Calu3 (cell line): ENCODE measurements at regions of chr4 and their contacts with region 1.

Region 1: DNA sequence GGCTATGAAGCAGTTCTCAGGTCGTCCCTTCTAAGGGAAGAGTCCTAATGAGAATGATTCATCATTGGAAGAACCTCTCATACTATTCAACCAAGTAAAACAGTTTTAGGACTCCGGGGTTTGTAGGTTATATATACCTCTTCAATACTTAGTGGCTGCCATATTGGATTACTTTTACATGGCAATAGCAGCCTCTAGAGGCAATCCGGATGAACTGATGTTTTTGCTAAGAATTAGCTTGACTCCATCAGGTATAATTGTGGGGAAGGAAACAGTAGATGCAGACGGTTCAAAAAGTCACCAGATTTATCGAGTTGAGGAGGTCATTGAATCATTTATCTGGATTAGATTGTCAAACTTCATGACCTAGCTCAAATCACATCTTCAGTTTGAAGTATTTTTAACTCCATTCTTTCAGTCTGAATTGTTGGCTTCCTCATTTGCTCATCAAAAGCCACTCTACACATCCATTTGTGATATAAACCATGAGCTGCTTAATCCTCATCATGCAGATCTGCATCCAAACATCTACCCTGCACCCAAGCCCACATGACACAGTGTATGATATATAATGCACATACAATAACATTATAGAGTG is 28.4 kb downstream of the GUCY1B1 start:
- DNase-seq: peak; percentile 28
- H3K4me3 Mint-ChIP-seq: no peak overlapping the region
- H3K27ac Mint-ChIP-seq: no peak overlapping the region
- H3K4me1 Mint-ChIP-seq: no peaks in the 10 kb centered on the region
- H3K27me3 Mint-ChIP-seq: no peaks in the 10 kb centered on the region
- CTCF ChIP-seq: no peak

Region 2: GRCh38 chr4:155140889-155141288 is 646.3 kb before region 1 on chr4:
- CTCF ChIA-PET with region 1: no interaction called
- intact Hi-C with region 1: no loop called
- DNase-seq: no peak
- H3K4me3 Mint-ChIP-seq: no peak overlapping the region
- H3K27ac Mint-ChIP-seq: no peak overlapping the region
- H3K4me1 Mint-ChIP-seq: no peaks in the 10 kb centered on the region
- H3K27me3 Mint-ChIP-seq: no peaks in the 10 kb centered on the region
- CTCF ChIP-seq: no peak

Region 3: DNA sequence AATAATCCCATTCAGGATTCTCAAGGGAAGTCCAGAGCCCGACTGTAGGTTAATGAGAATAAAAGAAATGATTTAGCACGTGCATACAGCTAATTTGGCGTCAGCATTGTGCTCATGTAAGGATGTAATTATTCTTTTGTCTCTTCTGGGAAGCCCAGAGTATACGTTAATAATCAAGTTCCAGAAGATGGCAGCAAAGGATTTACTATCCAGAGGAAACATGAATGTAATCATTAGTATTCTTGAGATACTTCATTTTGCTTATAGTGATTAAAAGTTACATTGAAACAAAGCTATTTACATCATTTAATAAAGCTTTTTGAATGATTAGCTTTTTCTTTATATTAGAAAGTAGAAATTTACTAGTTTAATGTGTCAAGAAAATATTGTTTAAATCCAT is 383.3 kb before region 1 on chr4:
- CTCF ChIA-PET with region 1: interaction called, 3 read pairs
- intact Hi-C with region 1: loop called (anchors 1 kb)
- DNase-seq: no peak
- H3K4me3 Mint-ChIP-seq: no peak overlapping the region
- H3K27ac Mint-ChIP-seq: no peak overlapping the region
- H3K4me1 Mint-ChIP-seq: peaks cover 19% of the 10 kb centered on the region
- H3K27me3 Mint-ChIP-seq: no peaks in the 10 kb centered on the region
- CTCF ChIP-seq: peak; percentile 28

Region 4: GRCh38 chr4:155442267-155443105 is 344.7 kb before region 1 on chr4:
- CTCF ChIA-PET with region 1: interaction called, 3 read pairs
- intact Hi-C with region 1: loop called (anchors 1 kb)
- DNase-seq: peak; percentile 81
- H3K4me3 Mint-ChIP-seq: peak overlapping the region; percentile 54
- H3K27ac Mint-ChIP-seq: peak overlapping the region; percentile 75
- H3K4me1 Mint-ChIP-seq: peaks cover 30% of the 10 kb centered on the region
- H3K27me3 Mint-ChIP-seq: no peaks in the 10 kb centered on the region
- CTCF ChIP-seq: peak; percentile 68

Region 5: GRCh38 chr4:155529272-155529671 is 257.9 kb before region 1 on chr4:
- CTCF ChIA-PET with region 1: interaction called, 6 read pairs
- intact Hi-C with region 1: loop called (anchors 2 kb)
- DNase-seq: peak; percentile 43
- H3K4me3 Mint-ChIP-seq: no peak overlapping the region
- H3K27ac Mint-ChIP-seq: peak overlapping the region; percentile 89
- H3K4me1 Mint-ChIP-seq: peaks cover 16% of the 10 kb centered on the region
- H3K27me3 Mint-ChIP-seq: no peaks in the 10 kb centered on the region
- CTCF ChIP-seq: peak; percentile 27

Region 6: DNA sequence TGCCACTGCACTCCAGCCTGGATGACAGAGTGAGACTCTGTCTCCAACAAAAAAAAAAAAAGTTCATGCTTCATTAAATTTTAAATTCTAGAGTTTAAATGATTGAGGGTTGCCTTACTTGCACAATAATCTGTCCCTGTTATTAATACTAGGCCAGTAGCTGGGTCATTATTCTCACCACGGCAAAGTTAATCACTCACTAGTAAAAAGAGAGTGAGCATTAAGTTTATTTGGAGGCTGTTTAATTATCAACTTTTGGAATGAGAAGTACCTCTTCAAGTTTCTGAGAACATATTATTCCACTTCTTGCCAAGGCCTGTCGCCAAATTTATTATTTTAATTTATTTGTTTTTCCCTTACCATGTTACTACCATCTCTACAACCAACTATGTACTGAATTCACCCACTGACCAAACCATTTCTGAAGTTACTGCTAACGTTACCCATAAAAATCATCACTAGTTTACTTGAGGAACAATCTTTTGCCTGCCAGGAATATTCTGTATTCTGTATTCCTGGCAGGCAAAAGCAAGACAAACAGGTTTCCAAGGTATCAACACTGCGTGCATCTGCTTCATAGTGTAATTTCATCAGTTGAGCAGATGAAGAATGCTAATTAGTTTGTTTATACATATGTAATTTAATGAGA is 94.1 kb before region 1 on chr4:
- CTCF ChIA-PET with region 1: interaction called, 3 read pairs
- intact Hi-C with region 1: loop called (anchors 10 kb)
- DNase-seq: no peak
- H3K4me3 Mint-ChIP-seq: peak overlapping the region; percentile 61
- H3K27ac Mint-ChIP-seq: peak overlapping the region; percentile 75
- H3K4me1 Mint-ChIP-seq: peaks cover 39% of the 10 kb centered on the region
- H3K27me3 Mint-ChIP-seq: no peaks in the 10 kb centered on the region
- CTCF ChIP-seq: no peak

Region 7: DNA sequence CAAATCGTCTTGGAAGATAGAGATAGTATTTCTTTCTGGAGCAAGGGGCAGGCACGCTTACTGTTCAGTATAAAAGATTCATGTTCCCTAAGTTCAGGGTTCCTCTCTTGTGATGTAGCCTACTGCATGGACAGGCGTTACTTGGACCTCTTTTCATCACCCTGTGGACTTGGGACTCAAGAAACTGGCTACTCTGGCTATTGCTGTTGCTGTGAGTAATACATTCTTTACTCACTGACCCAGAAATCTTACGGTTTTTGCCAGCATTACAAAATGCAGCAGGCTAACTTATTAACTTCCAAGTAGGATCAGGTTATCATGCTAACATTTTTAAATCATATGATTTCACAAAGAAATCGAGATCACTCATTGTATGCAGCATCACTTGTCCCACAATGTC is 41.2 kb before region 1 on chr4:
- CTCF ChIA-PET with region 1: no interaction called
- intact Hi-C with region 1: no loop called
- DNase-seq: peak; percentile 33
- H3K4me3 Mint-ChIP-seq: peak overlapping the region; percentile 27
- H3K27ac Mint-ChIP-seq: peak overlapping the region; percentile 61
- H3K4me1 Mint-ChIP-seq: peaks cover 30% of the 10 kb centered on the region
- H3K27me3 Mint-ChIP-seq: no peaks in the 10 kb centered on the region
- CTCF ChIP-seq: no peak